Caco-2 (cell line): ENCODE measurements at regions of chr15 and their contacts with region 1.

Region 1: GRCh38 chr15:100341662-100342560 is at the start of gene ADAMTS17:
- DNase-seq: peak; percentile 91 to 94
- H3K4me3 ChIP-seq: peak within 1 kb of the TSS; percentile 58
- H3K4me3 Mint-ChIP-seq: peak within 1 kb of the TSS; percentile 63
- H3K27ac Mint-ChIP-seq: no peak within 1 kb of the TSS
- H3K4me1 ChIP-seq: no peaks in the 10 kb centered on the region
- H3K4me1 Mint-ChIP-seq: no peaks in the 10 kb centered on the region
- H3K27me3 ChIP-seq: no peaks in the 10 kb centered on the region
- H3K27me3 Mint-ChIP-seq: peaks cover 9% of the 10 kb centered on the region
- CTCF ChIP-seq: peak; percentile 81 to 82
- total RNA-seq, gene ADAMTS17: 1.5 and 2.0 TPM in 2 replicates

Region 2: DNA sequence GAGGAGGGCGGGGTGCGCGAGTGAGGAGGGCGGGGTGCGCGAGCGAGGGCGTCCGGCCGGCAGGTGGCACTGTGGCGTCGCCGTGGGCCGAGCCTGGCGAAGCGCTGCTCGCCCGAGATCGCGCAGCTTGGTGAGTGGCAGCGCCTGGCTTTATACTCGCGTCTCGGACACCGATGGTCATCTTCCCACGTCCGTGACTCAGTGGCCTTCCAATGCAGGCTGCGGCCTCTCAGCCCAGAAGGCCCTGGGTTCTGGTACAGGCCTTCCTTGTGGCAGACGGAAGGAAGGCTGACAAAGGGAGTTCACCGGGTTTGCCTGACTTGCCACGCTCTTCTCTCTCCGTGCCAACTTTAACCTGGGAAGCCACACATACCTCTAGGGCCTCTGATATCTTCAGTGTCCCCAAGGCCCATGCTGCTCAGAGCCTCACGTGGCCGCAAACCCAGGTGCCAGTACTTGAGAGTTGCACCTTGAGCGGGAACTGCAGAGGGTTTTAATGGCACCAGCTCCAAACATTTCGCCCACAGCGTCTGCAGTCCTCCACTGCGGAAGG is 413.4 kb before region 1 on chr15:
- CTCF ChIA-PET with region 1: no interaction called
- POLR2A ChIA-PET with region 1: no interaction called
- intact Hi-C with region 1: loop called (anchors 2 kb)
- DNase-seq: peak; percentile 55 to 79
- H3K4me3 ChIP-seq: peak overlapping the region; percentile 48
- H3K4me3 Mint-ChIP-seq: peak overlapping the region; percentile 69
- H3K27ac Mint-ChIP-seq: no peak overlapping the region
- H3K4me1 ChIP-seq: no peaks in the 10 kb centered on the region
- H3K4me1 Mint-ChIP-seq: no peaks in the 10 kb centered on the region
- H3K27me3 ChIP-seq: no peaks in the 10 kb centered on the region
- H3K27me3 Mint-ChIP-seq: peaks cover 6% of the 10 kb centered on the region
- CTCF ChIP-seq: peak; percentile 24 to 51

Region 3: DNA sequence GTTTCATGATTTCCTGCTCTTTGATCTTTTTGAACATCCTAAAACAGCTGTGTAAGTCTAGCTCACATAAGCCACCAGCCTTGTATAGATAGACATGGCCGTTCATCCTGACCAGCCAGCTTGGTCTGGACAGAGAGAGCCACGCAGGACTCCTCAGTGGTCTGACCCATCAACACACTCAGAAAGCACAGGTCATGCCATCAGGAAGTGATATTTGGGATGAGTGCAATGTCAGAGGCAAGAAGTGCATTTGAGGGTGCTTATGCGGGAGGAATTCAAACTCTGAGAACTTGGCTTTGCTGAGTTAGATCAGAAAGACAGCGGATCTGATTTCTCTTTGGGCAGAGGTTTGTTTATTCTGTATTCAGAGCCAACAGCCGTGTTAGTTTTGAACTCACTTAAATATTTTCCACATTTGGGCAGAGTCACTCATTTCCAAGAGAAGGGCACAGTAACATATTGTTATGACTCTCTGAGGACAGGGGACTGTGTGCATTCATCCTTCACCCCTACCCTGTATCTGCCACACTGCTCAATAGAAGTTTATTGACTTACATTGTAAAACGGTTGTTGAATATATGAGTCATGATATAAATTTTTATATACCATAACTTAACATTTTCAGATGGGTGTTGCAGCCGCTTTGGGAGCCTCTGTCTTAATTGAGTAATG is 383.3 kb before region 1 on chr15:
- CTCF ChIA-PET with region 1: interaction called, 10 read pairs
- POLR2A ChIA-PET with region 1: no interaction called
- intact Hi-C with region 1: no loop called
- DNase-seq: no peak
- H3K4me3 ChIP-seq: no peak overlapping the region
- H3K4me3 Mint-ChIP-seq: no peak overlapping the region
- H3K27ac Mint-ChIP-seq: no peak overlapping the region
- H3K4me1 ChIP-seq: no peaks in the 10 kb centered on the region
- H3K4me1 Mint-ChIP-seq: no peaks in the 10 kb centered on the region
- H3K27me3 ChIP-seq: no peaks in the 10 kb centered on the region
- H3K27me3 Mint-ChIP-seq: no peaks in the 10 kb centered on the region
- CTCF ChIP-seq: no peak

Region 4: GRCh38 chr15:100207070-100207469 is 134.8 kb before region 1 on chr15:
- CTCF ChIA-PET with region 1: no interaction called
- POLR2A ChIA-PET with region 1: no interaction called
- intact Hi-C with region 1: loop called (anchors 2 kb)
- DNase-seq: peak; percentile 36 to 58
- H3K4me3 ChIP-seq: no peak overlapping the region
- H3K4me3 Mint-ChIP-seq: no peak overlapping the region
- H3K27ac Mint-ChIP-seq: peak overlapping the region; percentile 19
- H3K4me1 ChIP-seq: peaks cover 46% of the 10 kb centered on the region
- H3K4me1 Mint-ChIP-seq: peaks cover 22% of the 10 kb centered on the region
- H3K27me3 ChIP-seq: no peaks in the 10 kb centered on the region
- H3K27me3 Mint-ChIP-seq: no peaks in the 10 kb centered on the region
- CTCF ChIP-seq: no peak

Region 5: DNA sequence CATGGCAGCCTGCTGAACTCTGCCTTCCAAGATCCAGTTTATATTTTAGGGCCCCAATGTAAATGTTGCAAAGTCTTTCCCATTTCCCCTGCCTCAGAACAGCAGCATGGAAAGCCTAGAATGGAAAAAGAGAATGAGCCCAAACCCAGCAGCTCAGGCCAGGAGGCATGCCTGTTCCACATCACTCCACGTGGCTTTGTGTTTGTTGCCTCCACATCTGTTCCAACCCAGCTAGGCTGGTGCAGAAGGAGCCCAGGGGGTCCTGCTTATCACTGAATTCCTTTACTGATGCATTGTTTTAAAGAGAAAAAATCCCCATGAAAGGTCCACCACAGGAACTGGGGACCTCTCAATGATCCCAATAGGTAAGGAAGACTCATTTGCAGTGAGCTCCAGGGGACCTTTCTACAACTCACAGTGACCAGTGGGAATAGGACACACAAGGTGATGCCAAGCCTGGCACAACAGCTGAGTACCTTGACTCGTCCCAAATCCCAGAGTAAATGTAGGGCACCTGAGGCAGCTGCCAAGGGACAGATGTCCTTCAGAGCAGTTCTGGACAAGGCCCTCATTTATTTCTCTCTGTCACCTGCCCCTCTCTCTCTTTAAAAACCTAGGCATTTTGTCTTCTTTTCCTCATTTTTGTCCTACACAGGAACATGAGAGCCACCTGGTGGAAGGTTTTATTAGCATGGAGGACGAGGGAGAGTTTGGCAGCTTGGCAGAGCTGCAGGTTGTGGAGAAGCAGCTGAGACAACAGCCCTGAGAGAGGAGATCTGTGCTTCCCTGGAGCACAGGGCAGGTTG is 41.6 kb after region 1 on chr15:
- CTCF ChIA-PET with region 1: interaction called, 5 read pairs
- POLR2A ChIA-PET with region 1: no interaction called
- intact Hi-C with region 1: loop called (anchors 1 kb)
- DNase-seq: peak; percentile 44 to 47
- H3K4me3 ChIP-seq: no peak overlapping the region
- H3K4me3 Mint-ChIP-seq: no peak overlapping the region
- H3K27ac Mint-ChIP-seq: no peak overlapping the region
- H3K4me1 ChIP-seq: no peaks in the 10 kb centered on the region
- H3K4me1 Mint-ChIP-seq: no peaks in the 10 kb centered on the region
- H3K27me3 ChIP-seq: no peaks in the 10 kb centered on the region
- H3K27me3 Mint-ChIP-seq: no peaks in the 10 kb centered on the region
- CTCF ChIP-seq: peak; percentile 33 to 63